B cell (primary cell): ENCODE measurements at regions of chr10 and their contacts with region 1.

Region 1: GRCh38 chr10:119872860-119873681 is 428 bp upstream of the MCMBP start:
- DNase-seq: peak; percentile 96
- ATAC-seq: peak; percentile 92
- H3K4me3 ChIP-seq: peak overlapping the region; percentile 71 to 90 (median 89)
- H3K4me3 Mint-ChIP-seq: peak overlapping the region; percentile 91
- H3K27ac ChIP-seq: peak overlapping the region; percentile 83
- H3K27ac Mint-ChIP-seq: peak overlapping the region; percentile 86
- H3K4me1 ChIP-seq: peaks cover 22 to 23% of the 10 kb centered on the region in 2 donors
- H3K4me1 Mint-ChIP-seq: peaks cover 33% of the 10 kb centered on the region
- H3K27me3 ChIP-seq: no peaks in the 10 kb centered on the region
- H3K27me3 Mint-ChIP-seq: no peaks in the 10 kb centered on the region
- CTCF ChIP-seq: no peak

Region 2: GRCh38 chr10:119178372-119179119 is 694.5 kb before region 1 on chr10 and contains the start of gene PRDX3:
- CTCF ChIA-PET with region 1: no interaction called
- POLR2A ChIA-PET with region 1: no interaction called
- intact Hi-C with region 1: loop called (anchors 1 kb)
- DNase-seq: peak; percentile 92
- ATAC-seq: peak; percentile 99
- H3K4me3 ChIP-seq: peak within 1 kb of the TSS; percentile 88 to 98 (median 89)
- H3K4me3 Mint-ChIP-seq: peak within 1 kb of the TSS; percentile 94
- H3K27ac ChIP-seq: peak within 1 kb of the TSS; percentile 68 to 71
- H3K27ac Mint-ChIP-seq: peak within 1 kb of the TSS; percentile 90
- H3K4me1 ChIP-seq: peaks cover 11 to 15% of the 10 kb centered on the region in 2 donors
- H3K4me1 Mint-ChIP-seq: peaks cover 28% of the 10 kb centered on the region
- H3K27me3 ChIP-seq: no peaks in the 10 kb centered on the region
- H3K27me3 Mint-ChIP-seq: no peaks in the 10 kb centered on the region
- CTCF ChIP-seq: peak; percentile 29
- total RNA-seq, gene PRDX3: 36.2 and 36.3 TPM in 2 replicates

Region 3: DNA sequence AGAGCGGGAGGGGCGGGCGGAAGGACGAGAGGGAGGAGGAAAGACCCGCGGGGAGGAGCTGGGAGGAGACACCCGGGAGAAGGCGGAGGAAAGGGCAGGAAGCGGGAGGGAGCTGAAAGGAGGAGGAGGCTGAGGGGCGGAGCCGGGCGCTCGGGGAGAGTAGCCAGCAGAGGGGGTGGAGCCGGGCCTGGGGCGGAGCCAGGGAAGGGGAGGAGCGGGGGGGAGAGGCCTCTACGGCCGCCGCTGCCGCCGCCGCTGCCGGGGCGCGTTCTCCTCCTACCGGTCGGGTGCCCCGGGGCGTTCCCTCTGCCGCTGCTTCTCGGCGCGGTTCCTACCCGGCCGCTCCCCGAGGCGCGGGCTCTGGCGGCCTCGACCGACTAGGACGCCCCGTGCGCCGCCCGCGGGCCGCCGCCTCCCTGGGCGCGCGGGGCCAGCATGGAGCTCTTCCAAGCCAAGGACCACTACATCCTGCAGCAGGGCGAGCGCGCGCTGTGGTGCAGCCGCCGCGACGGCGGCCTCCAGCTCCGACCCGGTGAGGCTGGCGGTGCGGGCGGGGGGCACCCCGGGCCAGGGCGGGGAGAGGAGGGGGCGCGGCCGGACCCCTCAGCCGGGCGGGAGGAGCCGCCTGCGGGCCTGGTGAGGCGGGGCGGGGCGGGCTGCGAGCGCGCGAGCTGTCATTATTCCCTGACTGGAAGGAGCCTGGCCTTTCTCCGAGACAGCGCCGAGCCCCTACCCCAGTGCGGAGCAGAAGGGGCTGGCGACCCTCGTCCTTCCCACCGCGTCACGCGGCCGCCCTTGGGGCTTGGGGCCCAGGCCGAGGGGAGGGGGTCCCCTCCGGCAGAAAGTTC is 147.0 kb before region 1 on chr10 and contains the start of gene INPP5F:
- CTCF ChIA-PET with region 1: interaction called, 3 read pairs
- POLR2A ChIA-PET with region 1: interaction called, 7 read pairs
- intact Hi-C with region 1: loop called (anchors 5 kb)
- DNase-seq: peak; percentile 95
- ATAC-seq: peak; percentile 93
- H3K4me3 ChIP-seq: peak within 1 kb of the TSS; percentile 55 to 85 (median 70)
- H3K4me3 Mint-ChIP-seq: peak within 1 kb of the TSS; percentile 98
- H3K27ac ChIP-seq: peak within 1 kb of the TSS; percentile 73 to 90
- H3K27ac Mint-ChIP-seq: peak within 1 kb of the TSS; percentile 95
- H3K4me1 ChIP-seq: peaks cover 38 to 51% of the 10 kb centered on the region in 2 donors
- H3K4me1 Mint-ChIP-seq: peaks cover 48% of the 10 kb centered on the region
- H3K27me3 ChIP-seq: no peaks in the 10 kb centered on the region
- H3K27me3 Mint-ChIP-seq: no peaks in the 10 kb centered on the region
- CTCF ChIP-seq: peak; percentile 55
- total RNA-seq, gene INPP5F: 37.5 and 42.5 TPM in 2 replicates

Region 4: GRCh38 chr10:119892188-119893065 is 19.4 kb after region 1 on chr10 and contains the start of gene SEC23IP:
- CTCF ChIA-PET with region 1: interaction called, 14 read pairs
- POLR2A ChIA-PET with region 1: interaction called, 11 read pairs
- intact Hi-C with region 1: loop called (anchors 1 kb)
- DNase-seq: peak; percentile 92
- ATAC-seq: peak; percentile 98
- H3K4me3 ChIP-seq: peak within 1 kb of the TSS; percentile 76 to 98 (median 95)
- H3K4me3 Mint-ChIP-seq: peak within 1 kb of the TSS; percentile 96
- H3K27ac ChIP-seq: peak within 1 kb of the TSS; percentile 82
- H3K27ac Mint-ChIP-seq: peak within 1 kb of the TSS; percentile 98
- H3K4me1 ChIP-seq: peaks cover 12 to 13% of the 10 kb centered on the region in 2 donors
- H3K4me1 Mint-ChIP-seq: peaks cover 45% of the 10 kb centered on the region
- H3K27me3 ChIP-seq: no peaks in the 10 kb centered on the region
- H3K27me3 Mint-ChIP-seq: no peaks in the 10 kb centered on the region
- CTCF ChIP-seq: no peak
- total RNA-seq, gene SEC23IP: 69.7 and 77.3 TPM in 2 replicates

Region 5: DNA sequence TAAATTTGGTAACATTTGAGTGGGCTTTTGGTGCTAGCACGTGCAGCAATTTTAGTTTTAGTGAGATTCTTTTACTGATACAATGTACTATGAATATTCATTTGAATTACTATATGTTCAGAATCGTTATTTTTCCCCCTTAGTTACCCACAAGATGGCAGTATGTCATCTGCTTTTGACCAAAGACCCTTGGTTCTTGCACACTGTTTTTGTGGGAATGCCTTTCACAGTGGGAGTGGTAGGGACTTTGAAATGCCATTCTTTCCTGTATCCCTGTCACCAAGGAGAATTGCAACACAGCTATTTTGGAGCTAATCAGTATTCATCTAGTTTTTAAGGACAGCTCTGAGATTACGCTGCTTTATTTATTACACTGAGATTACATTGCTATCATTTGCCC is 60.1 kb after region 1 on chr10:
- CTCF ChIA-PET with region 1: no interaction called
- POLR2A ChIA-PET with region 1: no interaction called
- intact Hi-C with region 1: no loop called
- DNase-seq: no peak
- ATAC-seq: no peak
- H3K4me3 ChIP-seq: no peak overlapping the region
- H3K4me3 Mint-ChIP-seq: no peak overlapping the region
- H3K27ac ChIP-seq: no peak overlapping the region
- H3K27ac Mint-ChIP-seq: no peak overlapping the region
- H3K4me1 ChIP-seq: no peaks in the 10 kb centered on the region
- H3K4me1 Mint-ChIP-seq: no peaks in the 10 kb centered on the region
- H3K27me3 ChIP-seq: no peaks in the 10 kb centered on the region
- H3K27me3 Mint-ChIP-seq: no peaks in the 10 kb centered on the region
- CTCF ChIP-seq: peak; percentile 24

Region 6: DNA sequence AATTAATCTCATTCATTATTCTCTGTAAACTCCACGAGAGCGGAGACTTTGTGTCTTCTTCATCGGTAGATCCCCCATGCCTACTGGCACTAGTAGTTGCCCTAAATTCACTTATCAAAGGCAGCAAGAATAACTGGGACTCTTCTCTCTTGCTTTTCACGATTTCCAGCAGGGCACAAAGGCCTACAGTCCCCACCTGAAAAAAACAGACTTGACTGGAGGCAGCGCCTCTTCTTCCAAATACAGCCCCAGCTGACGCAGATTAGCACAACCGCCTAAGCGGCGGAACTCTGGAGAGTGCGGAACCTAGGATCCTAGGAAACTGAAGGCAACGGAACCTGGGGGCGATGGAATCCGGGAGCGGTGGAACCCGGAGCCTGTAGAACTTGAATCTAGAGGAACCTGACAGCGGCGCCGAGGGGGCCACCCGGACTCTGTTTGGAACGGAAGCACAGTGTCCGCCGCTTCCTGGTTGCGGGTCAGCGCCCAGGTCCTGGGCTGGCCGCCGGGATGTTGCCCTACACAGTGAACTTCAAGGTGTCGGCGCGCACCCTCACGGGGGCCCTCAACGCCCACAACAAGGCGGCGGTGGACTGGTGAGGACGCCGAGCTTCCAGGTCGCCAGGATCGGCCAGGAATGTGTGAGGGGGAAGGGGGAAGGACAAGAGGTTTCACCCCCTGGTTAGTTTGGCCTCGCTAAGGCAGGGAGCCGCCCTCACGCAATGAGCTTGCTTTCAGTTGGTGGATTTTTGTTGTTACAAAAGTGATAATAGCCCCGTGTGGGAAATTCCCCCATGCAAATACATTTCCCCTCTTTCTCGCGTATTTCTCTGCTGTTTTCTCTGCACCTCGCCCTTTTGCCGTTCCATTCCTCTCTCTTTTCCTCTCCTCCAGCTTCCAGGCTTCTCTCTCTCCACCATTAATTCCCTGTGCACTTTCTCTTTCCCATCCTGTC is 978.1 kb after region 1 on chr10 and contains the start of gene WDR11:
- CTCF ChIA-PET with region 1: no interaction called
- POLR2A ChIA-PET with region 1: no interaction called
- intact Hi-C with region 1: loop called (anchors 5 kb)
- DNase-seq: peak; percentile 91
- ATAC-seq: peak; percentile 89
- H3K4me3 ChIP-seq: peak within 1 kb of the TSS; percentile 87 to 97 (median 92)
- H3K4me3 Mint-ChIP-seq: peak within 1 kb of the TSS; percentile 100
- H3K27ac ChIP-seq: peak within 1 kb of the TSS; percentile 97 to 98
- H3K27ac Mint-ChIP-seq: peak within 1 kb of the TSS; percentile 100
- H3K4me1 ChIP-seq: peaks cover 19 to 22% of the 10 kb centered on the region in 2 donors
- H3K4me1 Mint-ChIP-seq: peaks cover 46% of the 10 kb centered on the region
- H3K27me3 ChIP-seq: no peaks in the 10 kb centered on the region
- H3K27me3 Mint-ChIP-seq: no peaks in the 10 kb centered on the region
- CTCF ChIP-seq: no peak
- total RNA-seq, gene WDR11: 230 and 236 TPM in 2 replicates